Activated CD8-positive, alpha-beta T cell treated with anti-CD3 and anti-CD28 coated beads, Interleukin-2, amount 10 ng/mL, durations not matched to agents 7 days and 5 days (primary cell): ENCODE measurements at regions of chr11 and their contacts with region 1.

Region 1: GRCh38 chr11:6443269-6444003 is 2.6 kb upstream of the HPX start:
- DNase-seq: peak; percentile 69
- ATAC-seq: peak; percentile 89
- H3K4me3 Mint-ChIP-seq: no peak overlapping the region
- H3K27ac Mint-ChIP-seq: no peak overlapping the region
- H3K4me1 Mint-ChIP-seq: no peaks in the 10 kb centered on the region
- H3K27me3 Mint-ChIP-seq: peaks cover 12% of the 10 kb centered on the region

Region 2: GRCh38 chr11:5967708-5968107 is 475.7 kb before region 1 on chr11:
- CTCF ChIA-PET with region 1: no interaction called
- POLR2A ChIA-PET with region 1: no interaction called
- DNase-seq: no peak
- ATAC-seq: no peak
- H3K4me3 Mint-ChIP-seq: no peak overlapping the region
- H3K27ac Mint-ChIP-seq: no peak overlapping the region
- H3K4me1 Mint-ChIP-seq: no peaks in the 10 kb centered on the region
- H3K27me3 Mint-ChIP-seq: peaks cover 3% of the 10 kb centered on the region

Region 3: DNA sequence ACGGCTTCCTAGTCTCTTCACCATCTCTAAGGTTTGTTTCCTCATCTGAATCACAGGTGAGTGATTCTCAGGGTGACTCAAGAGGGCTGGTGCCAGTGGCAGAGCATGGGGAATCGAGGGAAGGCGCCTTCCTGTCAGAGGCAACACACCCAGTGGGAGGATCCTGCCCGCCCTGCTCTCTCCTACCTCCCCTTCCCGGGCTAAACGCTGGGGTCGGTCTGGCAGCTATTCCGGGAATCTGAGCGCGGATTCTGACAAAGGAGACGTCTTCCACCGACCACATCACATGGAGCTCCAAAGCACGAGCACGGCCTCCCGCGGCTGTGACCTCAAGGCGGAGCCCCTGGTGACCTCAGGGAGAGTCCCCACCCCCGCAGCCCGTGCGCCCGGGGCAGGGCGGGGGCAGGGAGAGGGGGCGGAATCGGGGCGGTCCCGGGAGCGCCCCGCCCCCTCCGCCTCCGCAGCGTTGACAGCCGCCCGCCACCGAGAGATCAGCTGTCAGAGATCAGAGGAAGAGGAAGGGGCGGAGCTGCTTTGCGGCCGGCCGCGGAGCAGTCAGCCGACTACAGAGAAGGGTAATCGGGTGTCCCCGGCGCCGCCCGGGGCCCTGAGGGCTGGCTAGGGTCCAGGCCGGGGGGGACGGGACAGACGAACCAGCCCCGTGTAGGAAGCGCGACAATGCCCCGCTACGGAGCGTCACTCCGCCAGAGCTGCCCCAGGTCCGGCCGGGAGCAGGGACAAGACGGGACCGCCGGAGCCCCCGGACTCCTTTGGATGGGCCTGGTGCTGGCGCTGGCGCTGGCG is 53.3 kb before region 1 on chr11 and contains the start of gene SMPD1:
- CTCF ChIA-PET with region 1: interaction called, 20 read pairs
- POLR2A ChIA-PET with region 1: no interaction called
- DNase-seq: peak; percentile 95
- ATAC-seq: peak; percentile 92
- H3K4me3 Mint-ChIP-seq: peak within 1 kb of the TSS; percentile 89
- H3K27ac Mint-ChIP-seq: peak within 1 kb of the TSS; percentile 95
- H3K4me1 Mint-ChIP-seq: peaks cover 57% of the 10 kb centered on the region
- H3K27me3 Mint-ChIP-seq: peaks cover 2% of the 10 kb centered on the region
- total RNA-seq, gene SMPD1: 35.5 to 37.1 TPM

Region 4: GRCh38 chr11:6419009-6419631 is 24.3 kb before region 1 on chr11 and contains the start of gene APBB1:
- CTCF ChIA-PET with region 1: interaction called, 35 read pairs
- POLR2A ChIA-PET with region 1: no interaction called
- DNase-seq: peak; percentile 72
- ATAC-seq: peak; percentile 73
- H3K4me3 Mint-ChIP-seq: peak within 1 kb of the TSS; percentile 75
- H3K27ac Mint-ChIP-seq: peak within 1 kb of the TSS; percentile 30
- H3K4me1 Mint-ChIP-seq: peaks cover 5% of the 10 kb centered on the region
- H3K27me3 Mint-ChIP-seq: peaks cover 25% of the 10 kb centered on the region
- total RNA-seq, gene APBB1: 51.7 to 52.4 TPM

Region 5: GRCh38 chr11:6458352-6459098 is 15.1 kb after region 1 on chr11:
- CTCF ChIA-PET with region 1: interaction called, 37 read pairs
- POLR2A ChIA-PET with region 1: no interaction called
- DNase-seq: no peak
- ATAC-seq: no peak
- H3K4me3 Mint-ChIP-seq: no peak overlapping the region
- H3K27ac Mint-ChIP-seq: no peak overlapping the region
- H3K4me1 Mint-ChIP-seq: no peaks in the 10 kb centered on the region
- H3K27me3 Mint-ChIP-seq: no peaks in the 10 kb centered on the region

Region 6: GRCh38 chr11:6505577-6506240 is 62.3 kb after region 1 on chr11:
- CTCF ChIA-PET with region 1: interaction called, 11 read pairs
- POLR2A ChIA-PET with region 1: no interaction called
- DNase-seq: peak; percentile 41
- ATAC-seq: peak; percentile 72
- H3K4me3 Mint-ChIP-seq: no peak overlapping the region
- H3K27ac Mint-ChIP-seq: no peak overlapping the region
- H3K4me1 Mint-ChIP-seq: peaks cover 7% of the 10 kb centered on the region
- H3K27me3 Mint-ChIP-seq: no peaks in the 10 kb centered on the region